ENCODE measurements at regions of chr6 and their contacts with region 1.

Region 1: GRCh38 chr6:2931970-2932748 is 29.1 kb upstream of the SERPINB9 start:
- DNase-seq: peak; percentile 82 to 87
- H3K4me3 ChIP-seq: no peak overlapping the region
- H3K27ac ChIP-seq: no peak overlapping the region
- H3K4me1 ChIP-seq: peaks cover 0 to 3% of the 10 kb centered on the region in 2 donors
- H3K27me3 ChIP-seq: no peaks in the 10 kb centered on the region
- CTCF ChIP-seq: peak; percentile 86 to 97 (median 92)
- POLR2A ChIP-seq: no peak

Region 2: GRCh38 chr6:2791124-2791974 is 140.8 kb before region 1 on chr6:
- intact Hi-C with region 1: loop called (anchors 5 kb)
- DNase-seq: peak; percentile 68 to 74
- H3K4me3 ChIP-seq: no peak overlapping the region
- H3K27ac ChIP-seq: peak overlapping the region in 2 of 3 donors; percentile 27 to 66
- H3K4me1 ChIP-seq: peaks cover 8 to 15% of the 10 kb centered on the region in 2 donors
- H3K27me3 ChIP-seq: no peaks in the 10 kb centered on the region
- CTCF ChIP-seq: peak; percentile 30 to 93 (median 72)
- POLR2A ChIP-seq: no peak

Region 3: DNA sequence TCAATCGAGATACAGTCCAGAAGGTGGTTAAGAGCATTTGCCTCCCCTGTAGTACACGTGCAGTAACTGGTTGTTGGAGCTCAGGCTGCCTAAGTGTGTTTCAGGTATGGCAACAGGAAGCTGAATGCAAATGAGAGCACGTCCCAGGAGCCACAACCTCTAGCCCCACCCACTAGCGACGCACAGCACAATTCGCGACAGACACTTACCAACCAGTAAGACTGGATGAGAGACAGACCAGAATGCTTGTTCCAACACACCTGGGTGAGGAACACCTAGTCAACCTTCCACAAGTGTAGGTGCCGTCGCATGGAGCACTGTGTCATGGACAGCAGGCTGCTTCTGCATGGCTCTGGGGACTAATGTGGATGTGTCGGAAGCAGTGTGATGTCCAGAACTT is 83.3 kb before region 1 on chr6:
- intact Hi-C with region 1: loop called (anchors 5 kb)
- DNase-seq: no peak
- H3K4me3 ChIP-seq: no peak overlapping the region
- H3K27ac ChIP-seq: no peak overlapping the region
- H3K4me1 ChIP-seq: peaks cover 6 to 24% of the 10 kb centered on the region in 2 donors
- H3K27me3 ChIP-seq: no peaks in the 10 kb centered on the region
- CTCF ChIP-seq: no peak
- POLR2A ChIP-seq: no peak